Left cardiac atrium (tissue), 4 donors: ENCODE measurements at regions of chr5 and their contacts with region 1.

Region 1: DNA sequence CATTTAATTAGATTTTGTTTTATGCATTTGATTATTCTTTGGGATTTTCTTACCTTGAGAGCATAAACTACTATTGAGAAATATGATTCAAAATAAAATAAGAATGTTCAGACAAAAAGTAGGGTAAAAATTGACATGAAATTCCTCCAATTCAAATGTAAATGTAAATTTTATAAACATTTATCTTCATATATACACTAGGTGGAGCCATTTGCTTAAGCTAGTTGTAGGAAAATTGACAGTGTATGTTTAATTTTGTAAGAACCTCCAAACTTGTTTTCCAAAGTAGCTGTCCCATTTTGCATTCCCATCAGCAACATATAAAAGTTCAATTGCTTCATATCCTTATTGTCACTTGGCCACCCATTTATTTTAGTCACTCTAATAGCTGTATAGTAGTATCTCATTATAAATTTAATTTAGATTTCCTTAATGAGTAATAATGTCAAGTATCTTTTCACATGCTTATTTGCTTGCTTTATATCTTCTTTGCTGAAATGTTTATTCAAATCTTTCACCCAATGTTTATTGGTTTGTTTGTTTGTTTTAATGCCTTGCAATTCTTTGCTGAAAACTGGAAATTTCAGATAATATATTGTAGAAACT is 37.6 kb upstream of the SLCO6A1 start:
- DNase-seq: no peak
- ATAC-seq: no peak

Region 2: DNA sequence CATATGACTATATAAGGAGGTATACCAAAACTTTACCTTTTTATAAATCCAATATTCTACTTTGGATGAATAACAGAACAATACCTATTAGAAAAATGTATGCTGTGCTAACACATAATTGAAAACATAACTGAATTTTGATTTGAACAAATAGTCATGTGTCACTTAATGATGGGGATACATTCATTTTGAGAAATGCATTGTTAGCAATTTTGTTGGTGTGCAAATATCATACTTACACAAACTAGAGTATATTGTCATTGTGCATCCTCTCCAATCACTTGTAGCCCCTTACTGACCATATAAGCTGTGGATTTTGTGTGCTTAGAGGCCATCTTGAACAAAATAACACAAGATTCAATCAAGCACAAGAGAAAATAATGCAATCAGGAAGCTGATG is 168.0 kb before region 1 on chr5:
- intact Hi-C with region 1: no loop called
- DNase-seq: no peak
- ATAC-seq: no peak

Region 3: DNA sequence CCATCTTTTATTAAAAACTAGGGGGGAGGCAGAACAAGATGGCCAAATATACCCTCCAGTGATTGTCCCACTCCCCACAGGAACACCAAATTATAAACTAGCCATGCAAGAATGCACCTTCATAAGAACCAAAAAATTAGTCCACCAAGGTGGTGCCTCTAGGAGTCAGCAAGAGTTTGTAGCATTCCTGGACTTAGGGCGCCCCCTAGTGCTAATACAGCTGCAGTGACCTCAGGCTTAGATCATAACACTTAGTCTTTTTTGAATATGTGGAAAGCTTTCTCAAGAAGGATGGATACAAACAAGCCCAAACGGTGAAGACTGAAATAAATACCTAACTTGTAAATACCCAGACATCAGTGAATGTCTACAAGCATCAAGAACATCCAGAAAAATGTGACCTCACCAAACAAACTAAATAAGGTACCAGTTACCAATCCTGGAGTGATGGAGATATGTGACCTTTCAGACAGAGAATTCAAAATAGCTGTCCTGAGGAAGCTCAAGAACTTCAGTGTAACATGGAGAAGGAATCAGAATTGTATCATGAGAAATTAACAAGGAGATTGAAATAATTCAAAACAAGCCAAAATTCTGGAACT is 602.9 kb after region 1 on chr5:
- intact Hi-C with region 1: loop called in 1 of 2 experiments (anchors 10 kb)
- DNase-seq: peak; percentile 71
- ATAC-seq: peak; percentile 88 to 89